ENCODE measurements at regions of chr11 and their contacts with region 1.

Region 1: DNA sequence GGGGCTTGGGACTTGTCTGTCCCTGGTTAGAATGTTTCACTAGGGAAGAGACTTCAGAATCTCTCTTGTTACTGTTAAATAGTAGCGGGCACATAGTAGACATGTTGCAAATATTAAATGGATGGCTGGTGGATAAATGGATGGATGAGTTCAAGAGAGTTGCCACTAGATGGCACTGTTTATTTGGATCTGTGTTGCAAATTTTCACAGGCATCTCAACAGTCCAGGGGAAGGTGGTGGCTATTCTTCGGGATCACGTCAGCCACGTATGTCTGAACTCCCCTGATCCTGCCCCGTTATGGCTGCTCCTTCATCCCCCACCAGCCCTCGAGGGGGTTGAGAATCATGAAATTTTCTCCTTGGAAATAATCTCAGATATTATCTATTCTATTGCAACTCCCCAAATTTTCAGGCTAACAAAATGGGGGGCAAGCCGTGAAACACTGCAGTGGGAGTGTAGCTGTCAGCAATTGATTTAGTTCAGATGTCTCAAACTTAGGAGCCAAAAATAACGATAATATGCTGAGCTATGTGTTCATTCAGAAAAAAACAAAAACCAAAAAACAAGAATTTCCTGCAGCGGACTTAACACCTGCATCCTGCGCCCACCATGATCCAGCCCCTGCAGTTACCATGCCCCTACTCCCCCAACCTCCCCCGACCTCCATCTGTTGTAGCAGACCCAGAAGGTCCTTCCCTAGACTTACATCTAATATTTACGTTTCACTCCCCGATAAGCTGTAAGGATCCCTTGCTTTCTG is 29.1 kb upstream of the BIRC3 start:
- DNase-seq: peak; percentile 70
- H3K4me3 ChIP-seq: no peak overlapping the region
- H3K27ac ChIP-seq: peak overlapping the region; percentile 15
- H3K4me1 ChIP-seq: peaks cover 10% of the 10 kb centered on the region
- H3K27me3 ChIP-seq: no peaks in the 10 kb centered on the region
- CTCF ChIP-seq: peak; percentile 46 to 71

Region 2: GRCh38 chr11:102317099-102317767 is 29.1 kb after region 1 on chr11 and contains the start of gene BIRC3:
- CTCF ChIA-PET with region 1: interaction called, 12 read pairs
- dilution Hi-C with region 1: loop called (anchors 5 kb)
- in situ Hi-C with region 1: no loop called
- intact Hi-C with region 1: loop called (anchors 2 kb)
- DNase-seq: peak; percentile 99
- H3K4me3 ChIP-seq: peak within 1 kb of the TSS; percentile 35 to 56 (median 50)
- H3K27ac ChIP-seq: peak within 1 kb of the TSS; percentile 98
- H3K4me1 ChIP-seq: peaks cover 39% of the 10 kb centered on the region
- H3K27me3 ChIP-seq: no peaks in the 10 kb centered on the region
- CTCF ChIP-seq: peak in 1 of 2 donors; percentile 43
- total RNA-seq, gene BIRC3: 0.83 to 17.5 TPM

Region 3: GRCh38 chr11:102346748-102347461 is 58.8 kb after region 1 on chr11 and contains the start of gene BIRC2:
- CTCF ChIA-PET with region 1: no interaction called
- dilution Hi-C with region 1: no loop called
- in situ Hi-C with region 1: loop called in 1 of 2 experiments (anchors 10 kb)
- intact Hi-C with region 1: loop called (anchors 1 kb)
- DNase-seq: peak; percentile 94
- H3K4me3 ChIP-seq: peak within 1 kb of the TSS; percentile 65 to 81 (median 80)
- H3K27ac ChIP-seq: peak within 1 kb of the TSS; percentile 88
- H3K4me1 ChIP-seq: peaks cover 23% of the 10 kb centered on the region
- H3K27me3 ChIP-seq: no peaks in the 10 kb centered on the region
- CTCF ChIP-seq: peak; percentile 52 to 83
- total RNA-seq, gene BIRC2: 59.4 to 78.2 TPM

Region 4: GRCh38 chr11:102599642-102600261 is 311.6 kb after region 1 on chr11:
- CTCF ChIA-PET with region 1: no interaction called
- dilution Hi-C with region 1: no loop called
- in situ Hi-C with region 1: loop called (anchors 10 kb)
- intact Hi-C with region 1: no loop called
- DNase-seq: peak; percentile 95
- H3K4me3 ChIP-seq: peak overlapping the region in 1 of 3 experiments; percentile 10
- H3K27ac ChIP-seq: peak overlapping the region; percentile 91
- H3K4me1 ChIP-seq: peaks cover 50% of the 10 kb centered on the region
- H3K27me3 ChIP-seq: no peaks in the 10 kb centered on the region
- CTCF ChIP-seq: no peak

Region 5: GRCh38 chr11:102614485-102614884 is 326.3 kb after region 1 on chr11:
- CTCF ChIA-PET with region 1: no interaction called
- dilution Hi-C with region 1: no loop called
- in situ Hi-C with region 1: loop called (anchors 10 kb)
- intact Hi-C with region 1: loop called (anchors 1 kb)
- DNase-seq: no peak
- H3K4me3 ChIP-seq: no peak overlapping the region
- H3K27ac ChIP-seq: no peak overlapping the region
- H3K4me1 ChIP-seq: no peaks in the 10 kb centered on the region
- H3K27me3 ChIP-seq: no peaks in the 10 kb centered on the region
- CTCF ChIP-seq: peak; percentile 5 to 34

Region 6: DNA sequence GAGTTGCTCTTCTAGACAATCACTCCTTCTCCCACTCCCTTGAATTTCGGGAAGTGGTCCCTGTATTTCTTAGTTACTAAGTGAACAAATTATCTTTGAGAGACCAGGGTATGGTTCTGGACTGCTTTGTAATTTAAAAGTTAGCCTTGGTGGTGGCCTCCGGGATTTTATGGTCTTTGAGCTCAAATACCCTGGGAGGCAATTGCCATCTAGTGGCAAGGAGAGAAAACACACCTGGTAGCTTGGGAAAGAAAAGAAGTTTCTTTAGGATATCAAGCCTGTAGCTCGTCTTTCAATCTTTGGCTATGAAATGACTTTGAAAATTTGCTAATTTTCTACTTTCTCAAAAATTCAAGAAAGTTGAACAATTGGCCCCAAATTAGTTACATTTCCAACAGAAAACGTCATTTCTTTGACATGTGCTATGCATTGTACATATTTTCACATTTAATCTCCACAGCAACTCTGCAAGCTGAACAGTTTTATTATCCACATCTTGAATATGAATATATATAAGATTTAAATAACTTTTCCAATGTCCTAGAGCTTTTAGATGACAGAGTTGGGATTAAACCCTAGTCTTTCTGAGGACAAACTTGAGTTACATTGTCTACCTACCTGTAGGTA is 378.3 kb after region 1 on chr11:
- CTCF ChIA-PET with region 1: no interaction called
- dilution Hi-C with region 1: no loop called
- in situ Hi-C with region 1: no loop called
- intact Hi-C with region 1: loop called (anchors 1 kb)
- DNase-seq: peak; percentile 37
- H3K4me3 ChIP-seq: no peak overlapping the region
- H3K27ac ChIP-seq: no peak overlapping the region
- H3K4me1 ChIP-seq: no peaks in the 10 kb centered on the region
- H3K27me3 ChIP-seq: no peaks in the 10 kb centered on the region
- CTCF ChIP-seq: peak; percentile 89 to 92